ENCODE measurements at regions of chr17 and their contacts with region 1.

Region 1: GRCh38 chr17:44947461-44948314 is at the start of gene KIF18B:
- DNase-seq: peak; percentile 77 to 94 (median 84)
- ATAC-seq: peak; percentile 98
- H3K4me3 ChIP-seq: peak within 1 kb of the TSS; percentile 60
- H3K4me3 Mint-ChIP-seq: peak within 1 kb of the TSS; percentile 93
- H3K27ac ChIP-seq: peak within 1 kb of the TSS in 1 of 2 donors; percentile 25
- H3K27ac Mint-ChIP-seq: peak within 1 kb of the TSS; percentile 85
- H3K4me1 ChIP-seq: peaks cover 20% of the 10 kb centered on the region
- H3K4me1 Mint-ChIP-seq: peaks cover 7% of the 10 kb centered on the region
- H3K27me3 ChIP-seq: peaks cover 0 to 5% of the 10 kb centered on the region in 2 experiments
- H3K27me3 Mint-ChIP-seq: no peaks in the 10 kb centered on the region
- CTCF ChIP-seq: no peak
- total RNA-seq, gene KIF18B: 0.05 to 0.08 TPM

Region 2: GRCh38 chr17:44820631-44821212 is 127.0 kb before region 1 on chr17:
- CTCF ChIA-PET with region 1: no interaction called
- POLR2A ChIA-PET with region 1: no interaction called
- intact Hi-C with region 1: no loop called
- DNase-seq: no peak
- ATAC-seq: no peak
- H3K4me3 ChIP-seq: no peak overlapping the region
- H3K4me3 Mint-ChIP-seq: no peak overlapping the region
- H3K27ac ChIP-seq: no peak overlapping the region
- H3K27ac Mint-ChIP-seq: no peak overlapping the region
- H3K4me1 ChIP-seq: no peaks in the 10 kb centered on the region
- H3K4me1 Mint-ChIP-seq: no peaks in the 10 kb centered on the region
- H3K27me3 ChIP-seq: peaks cover 4 to 12% of the 10 kb centered on the region in 2 experiments
- H3K27me3 Mint-ChIP-seq: peaks cover 28% of the 10 kb centered on the region
- CTCF ChIP-seq: no peak

Region 3: DNA sequence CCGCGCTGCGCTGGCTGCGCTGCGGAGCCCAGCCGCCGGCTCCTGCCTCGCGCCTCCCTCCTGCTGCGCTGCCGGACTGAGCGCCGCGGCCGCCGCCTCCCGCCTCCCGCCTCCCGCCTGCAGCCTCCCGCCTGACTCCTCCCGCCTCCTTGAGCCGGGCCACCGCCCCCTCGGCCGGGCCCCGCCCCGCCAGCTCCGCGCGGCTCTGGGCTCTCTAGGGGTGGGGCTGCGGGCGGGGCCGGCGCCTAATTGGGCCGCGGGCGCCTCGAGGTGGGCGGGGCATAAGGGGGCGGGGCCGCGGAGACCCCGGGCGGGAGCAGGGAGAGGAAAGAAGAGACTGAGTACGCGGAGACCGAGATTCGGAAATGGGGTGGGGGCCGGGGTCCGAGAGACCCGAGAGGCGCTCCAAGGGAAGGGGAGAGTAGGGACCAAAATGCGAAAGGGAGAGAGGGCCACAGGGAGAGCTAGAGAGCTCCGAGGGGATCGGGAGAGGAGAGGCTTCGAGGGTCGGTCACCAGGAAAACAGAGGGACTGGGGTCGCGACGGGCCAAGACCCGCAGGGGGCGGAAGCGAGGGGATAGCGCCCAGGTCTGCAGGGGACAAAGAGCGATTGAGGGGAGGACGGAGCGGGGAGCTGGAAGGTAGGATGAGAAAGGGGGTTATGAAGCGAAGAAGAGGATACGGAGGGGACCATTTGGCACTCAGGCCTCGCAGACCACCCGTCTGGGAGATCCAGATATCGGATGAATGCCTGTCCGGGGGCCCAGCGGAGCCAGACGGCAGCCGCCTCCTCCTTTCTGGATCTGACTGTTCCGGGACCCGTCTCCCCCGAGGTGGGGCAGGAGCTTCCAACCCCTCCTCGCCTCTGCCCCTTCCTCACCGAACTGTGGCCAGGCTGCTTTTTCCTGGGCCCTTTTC is 20.8 kb after region 1 on chr17 and contains the start of gene C1QL1:
- CTCF ChIA-PET with region 1: no interaction called
- POLR2A ChIA-PET with region 1: no interaction called
- intact Hi-C with region 1: loop called in 1 of 2 experiments (anchors 2 kb)
- DNase-seq: peak; percentile 64 to 93 (median 85)
- ATAC-seq: peak; percentile 92
- H3K4me3 ChIP-seq: peak within 1 kb of the TSS; percentile 54
- H3K4me3 Mint-ChIP-seq: peak within 1 kb of the TSS; percentile 83
- H3K27ac ChIP-seq: no peak within 1 kb of the TSS
- H3K27ac Mint-ChIP-seq: no peak within 1 kb of the TSS
- H3K4me1 ChIP-seq: peaks cover 42% of the 10 kb centered on the region
- H3K4me1 Mint-ChIP-seq: peaks cover 32% of the 10 kb centered on the region
- H3K27me3 ChIP-seq: peaks cover 42 to 54% of the 10 kb centered on the region in 2 experiments
- H3K27me3 Mint-ChIP-seq: peaks cover 63% of the 10 kb centered on the region
- CTCF ChIP-seq: peak; percentile 28
- total RNA-seq, gene C1QL1: not detected